Activated CD4-positive, alpha-beta T cell treated with anti-CD3 and anti-CD28 coated beads, Interleukin-2, amount 10 ng/mL, durations not matched to agents 7 days and 5 days (primary cell): ENCODE measurements at regions of chr17 and their contacts with region 1.

Region 1: DNA sequence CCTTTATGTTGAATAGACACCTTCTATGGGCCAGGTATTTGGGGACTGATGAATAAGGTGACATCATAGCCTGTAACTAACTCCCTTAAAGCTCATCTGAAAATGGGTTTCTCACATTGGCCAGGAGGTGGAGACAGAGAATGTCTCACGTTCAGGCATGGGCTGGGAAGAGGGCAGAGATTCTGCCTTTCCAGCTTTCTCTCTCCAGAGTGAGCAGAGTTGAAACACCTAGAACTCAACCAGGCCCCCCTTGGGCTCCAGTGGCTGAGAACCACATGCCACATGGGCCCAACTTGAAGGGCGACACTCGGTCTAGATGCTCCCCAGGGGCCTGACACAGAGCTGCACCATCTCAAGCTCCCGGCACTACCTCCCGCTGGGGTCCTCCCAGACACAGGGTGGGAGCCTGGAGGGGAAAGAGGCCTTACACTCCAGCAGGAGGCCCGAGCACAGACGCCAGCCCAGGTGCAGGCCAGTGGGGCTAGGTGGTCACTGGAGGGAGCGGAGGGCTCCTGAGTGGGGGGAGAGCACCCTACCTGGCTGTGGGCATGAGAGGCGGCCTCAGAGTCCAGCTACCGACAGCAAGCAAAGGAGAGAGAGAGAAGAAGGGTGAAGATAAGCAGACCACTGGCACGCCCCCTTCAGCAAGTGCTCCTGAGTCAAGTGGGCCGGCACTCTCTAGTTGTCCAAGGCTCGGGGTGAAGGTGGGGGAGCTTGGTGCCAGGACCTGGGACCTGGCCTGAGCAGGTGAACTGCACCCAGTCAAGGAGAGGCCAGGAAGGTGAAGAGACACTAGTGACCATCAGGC is 55.9 kb downstream of the MYO18A start:
- DNase-seq: peak; percentile 66
- H3K4me3 Mint-ChIP-seq: no peak overlapping the region
- H3K27ac Mint-ChIP-seq: no peak overlapping the region
- H3K4me1 Mint-ChIP-seq: peaks cover 4% of the 10 kb centered on the region
- H3K27me3 Mint-ChIP-seq: no peaks in the 10 kb centered on the region

Region 2: DNA sequence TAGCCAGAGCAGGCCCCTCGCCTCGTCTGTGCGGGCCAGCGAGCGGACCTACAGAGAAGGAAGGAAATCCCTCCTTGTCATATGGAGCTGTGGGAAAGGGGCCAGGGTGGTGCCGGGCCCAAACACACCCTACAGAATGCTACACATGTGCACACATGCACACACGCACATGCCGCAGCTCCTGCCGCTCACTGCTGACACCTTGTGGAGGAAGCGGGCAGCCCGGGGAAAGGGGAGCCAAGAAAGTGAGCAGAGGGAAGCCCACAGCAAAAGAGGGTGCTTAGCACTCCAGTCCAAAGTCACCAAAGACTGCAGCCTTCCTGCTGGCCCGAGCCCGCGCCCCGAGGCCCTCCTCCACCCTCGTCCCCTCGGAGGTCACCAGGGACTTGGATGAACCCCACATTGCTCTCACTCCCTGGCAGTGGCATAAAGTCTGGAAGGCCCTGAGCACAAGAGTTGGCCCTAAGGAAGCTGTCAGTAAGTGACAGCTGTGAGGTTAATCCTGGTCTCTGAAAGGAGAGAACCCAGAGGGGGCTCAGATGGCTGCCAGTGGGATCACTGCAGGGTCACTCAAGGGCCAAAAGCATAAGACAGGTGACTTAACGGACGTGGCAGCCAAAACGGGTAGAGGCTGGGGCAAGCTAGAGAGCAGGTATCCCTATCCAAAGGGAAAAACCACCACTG is 12.4 kb before region 1 on chr17:
- CTCF ChIA-PET with region 1: interaction called, 56 read pairs
- POLR2A ChIA-PET with region 1: no interaction called
- DNase-seq: peak; percentile 72
- H3K4me3 Mint-ChIP-seq: no peak overlapping the region
- H3K27ac Mint-ChIP-seq: no peak overlapping the region
- H3K4me1 Mint-ChIP-seq: peaks cover 2% of the 10 kb centered on the region
- H3K27me3 Mint-ChIP-seq: no peaks in the 10 kb centered on the region

Region 3: GRCh38 chr17:29140051-29140621 is 15.8 kb after region 1 on chr17:
- CTCF ChIA-PET with region 1: interaction called, 18 read pairs
- POLR2A ChIA-PET with region 1: interaction called, 4 read pairs
- DNase-seq: peak; percentile 87
- H3K4me3 Mint-ChIP-seq: peak overlapping the region; percentile 87
- H3K27ac Mint-ChIP-seq: peak overlapping the region; percentile 92
- H3K4me1 Mint-ChIP-seq: peaks cover 68% of the 10 kb centered on the region
- H3K27me3 Mint-ChIP-seq: no peaks in the 10 kb centered on the region

Region 4: DNA sequence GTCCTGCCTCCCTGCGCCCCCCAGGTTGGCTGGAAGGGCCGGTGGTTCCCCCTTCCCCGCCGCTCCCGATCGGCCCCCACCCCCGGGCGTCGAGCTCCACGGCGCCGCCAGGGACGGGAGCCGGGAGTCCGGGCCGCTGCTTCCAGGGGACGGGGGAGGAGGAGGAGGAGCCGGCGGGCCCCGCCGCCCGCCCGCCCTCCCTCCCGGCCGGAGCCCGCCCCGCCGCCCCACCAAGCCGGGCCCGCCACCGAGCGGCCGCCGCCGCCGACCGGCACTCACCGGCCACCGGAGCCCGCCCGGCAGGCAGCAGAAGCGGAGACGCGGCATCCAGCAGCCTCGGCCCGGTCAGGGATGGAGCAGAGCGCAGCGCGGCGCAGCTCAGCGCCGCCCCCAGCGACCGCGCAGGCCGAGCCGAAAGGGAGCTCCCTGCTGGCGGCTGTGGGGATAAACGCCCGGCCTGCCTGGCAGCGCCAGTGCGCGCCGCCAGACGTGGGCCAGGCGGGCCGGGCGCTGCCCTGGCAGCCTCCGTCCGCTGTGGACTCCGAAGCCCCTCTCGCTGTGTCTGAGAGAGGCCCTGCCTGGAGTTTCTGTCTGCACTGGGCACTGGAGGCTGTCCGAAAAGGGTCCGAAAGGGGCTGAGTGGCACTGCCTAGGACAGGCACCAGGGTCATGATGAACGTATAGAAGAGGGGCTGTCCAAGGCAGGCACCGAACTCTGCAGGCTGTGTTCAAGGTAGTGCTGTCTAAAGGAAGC is 55.9 kb after region 1 on chr17 and contains the start of gene MYO18A:
- CTCF ChIA-PET with region 1: interaction called, 10 read pairs
- POLR2A ChIA-PET with region 1: no interaction called
- DNase-seq: peak; percentile 78
- H3K4me3 Mint-ChIP-seq: peak within 1 kb of the TSS; percentile 58
- H3K27ac Mint-ChIP-seq: peak within 1 kb of the TSS; percentile 27
- H3K4me1 Mint-ChIP-seq: peaks cover 36% of the 10 kb centered on the region
- H3K27me3 Mint-ChIP-seq: peaks cover 15% of the 10 kb centered on the region
- total RNA-seq, gene MYO18A: 82.2 to 101 TPM

Region 5: GRCh38 chr17:29219378-29220047 is 95.2 kb after region 1 on chr17:
- CTCF ChIA-PET with region 1: interaction called, 10 read pairs
- POLR2A ChIA-PET with region 1: no interaction called
- DNase-seq: peak; percentile 79
- H3K4me3 Mint-ChIP-seq: no peak overlapping the region
- H3K27ac Mint-ChIP-seq: no peak overlapping the region
- H3K4me1 Mint-ChIP-seq: peaks cover 8% of the 10 kb centered on the region
- H3K27me3 Mint-ChIP-seq: peaks cover 5% of the 10 kb centered on the region